Activated CD4-positive, alpha-beta memory T cell treated with anti-CD3 and anti-CD28 coated beads for 36 hours (primary cell): ENCODE measurements at regions of chr2 and their contacts with region 1.

Region 1: DNA sequence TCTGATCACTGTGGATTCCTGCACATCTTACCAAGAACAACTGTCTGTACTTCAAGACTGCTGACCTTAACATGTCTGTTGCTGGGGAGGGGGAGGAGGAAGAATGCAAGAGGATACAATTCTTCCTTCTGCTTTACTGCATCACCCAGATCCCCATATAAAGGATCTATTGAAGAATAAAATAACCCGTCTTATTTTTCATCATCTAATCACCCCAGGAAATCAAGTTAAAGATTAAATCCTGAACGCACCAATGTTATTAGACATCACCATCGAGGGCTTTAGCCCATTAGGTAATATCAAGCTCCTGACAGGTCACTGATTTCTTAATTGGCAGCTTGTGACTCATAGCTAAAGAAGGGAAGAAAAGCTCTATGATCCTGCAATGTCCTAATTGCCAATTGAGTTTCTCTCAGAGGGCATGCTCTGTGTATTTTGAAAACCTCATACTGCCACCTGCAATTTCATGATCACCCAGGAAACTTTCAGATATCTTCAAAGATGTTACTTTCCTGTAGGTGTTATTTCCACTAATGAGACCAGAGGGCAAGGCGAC is 75.4 kb upstream of the KCNE4 start:
- DNase-seq: no peak
- H3K4me3 Mint-ChIP-seq: no peak overlapping the region
- H3K27ac Mint-ChIP-seq: no peak overlapping the region
- H3K4me1 Mint-ChIP-seq: no peaks in the 10 kb centered on the region
- H3K27me3 Mint-ChIP-seq: peaks cover 11% of the 10 kb centered on the region

Region 2: DNA sequence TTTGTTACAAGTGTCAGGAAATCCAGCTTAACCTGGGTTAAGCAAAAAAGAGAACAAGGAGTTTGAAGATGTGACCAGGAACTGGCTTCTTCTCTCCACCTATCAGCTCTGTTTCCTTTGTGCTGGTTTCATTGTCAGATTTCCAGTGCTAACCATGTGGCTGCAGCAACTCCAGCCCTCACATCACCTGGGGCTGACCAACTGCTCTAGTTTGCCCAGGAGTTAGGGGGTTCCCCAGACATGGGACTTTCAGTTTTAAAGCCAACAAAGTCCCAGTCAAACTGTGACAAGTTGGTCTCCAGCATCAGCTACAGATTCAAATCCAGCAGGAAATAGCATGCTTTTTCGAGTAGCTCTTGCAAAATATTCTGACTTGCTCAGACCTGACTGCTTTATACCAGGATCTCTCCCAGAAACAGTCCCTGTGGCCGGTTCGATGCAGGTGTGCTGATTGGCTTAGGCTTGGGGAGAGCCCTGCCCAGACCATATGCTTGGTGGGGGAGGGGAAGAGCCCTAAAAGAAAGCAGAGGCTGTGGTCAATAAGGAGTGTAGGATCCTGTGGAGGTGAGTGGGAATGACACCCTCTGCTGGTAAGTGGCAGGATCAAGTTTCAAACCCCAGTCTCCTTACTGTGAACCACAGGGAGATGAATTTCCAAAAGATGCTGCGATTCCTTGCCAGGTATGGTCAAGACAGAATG is 124.9 kb after region 1 on chr2:
- CTCF ChIA-PET with region 1: interaction called, 11 read pairs
- POLR2A ChIA-PET with region 1: no interaction called
- intact Hi-C with region 1: no loop called
- DNase-seq: no peak
- H3K4me3 Mint-ChIP-seq: no peak overlapping the region
- H3K27ac Mint-ChIP-seq: no peak overlapping the region
- H3K4me1 Mint-ChIP-seq: no peaks in the 10 kb centered on the region
- H3K27me3 Mint-ChIP-seq: no peaks in the 10 kb centered on the region

Region 3: GRCh38 chr2:223601932-223602666 is 625.5 kb after region 1 on chr2 and contains the start of gene SCG2:
- CTCF ChIA-PET with region 1: interaction called, 3 read pairs
- POLR2A ChIA-PET with region 1: no interaction called
- intact Hi-C with region 1: loop called (anchors 5 kb)
- DNase-seq: peak; percentile 54
- H3K4me3 Mint-ChIP-seq: no peak within 1 kb of the TSS
- H3K27ac Mint-ChIP-seq: no peak within 1 kb of the TSS
- H3K4me1 Mint-ChIP-seq: no peaks in the 10 kb centered on the region
- H3K27me3 Mint-ChIP-seq: peaks cover 5% of the 10 kb centered on the region
- total RNA-seq, gene SCG2: not detected